Left colon (tissue), 2 donors: ENCODE measurements at regions of chr3 and their contacts with region 1.

Region 1: GRCh38 chr3:156554842-156555687 is at the start of gene SSR3:
- DNase-seq: peak; percentile 99
- ATAC-seq: peak; percentile 100
- total RNA-seq, gene SSR3: 114 to 123 TPM

Region 2: DNA sequence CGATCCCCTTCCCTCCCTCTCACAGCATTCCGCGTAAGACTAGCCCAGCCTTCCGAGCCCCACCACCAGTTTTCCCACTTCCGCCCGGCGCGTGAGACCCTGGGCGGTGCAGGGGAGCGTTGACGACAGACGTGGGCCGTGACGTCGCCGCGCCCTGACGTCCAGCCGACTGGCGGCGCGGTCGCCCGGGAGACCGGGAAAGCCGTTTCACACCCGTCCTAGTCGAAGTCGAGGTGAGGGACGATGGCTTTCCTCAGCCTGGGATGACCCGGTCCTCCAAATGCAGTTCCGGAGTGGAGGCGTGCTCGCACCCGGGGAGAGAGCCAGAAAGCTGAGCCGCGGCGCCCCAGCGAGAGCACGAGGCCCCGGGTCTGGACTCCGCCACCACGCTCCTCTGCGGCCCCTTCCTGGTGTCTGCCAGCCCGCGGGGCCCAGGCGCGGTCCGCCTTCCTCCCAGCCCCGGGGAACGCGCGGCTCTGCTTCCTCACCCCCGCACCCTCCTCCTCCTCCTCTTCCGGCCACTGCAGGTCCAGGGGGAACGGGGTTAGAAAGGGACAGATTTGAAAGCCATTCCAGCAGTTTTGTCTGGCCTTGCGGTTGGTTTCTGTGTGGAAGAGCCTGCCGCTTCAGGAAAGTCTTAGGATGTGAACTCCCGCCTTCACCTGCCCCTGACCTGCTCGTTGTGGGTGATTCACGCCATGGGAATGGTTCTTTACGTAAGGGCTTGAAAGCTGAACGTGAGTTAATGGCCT is 271.3 kb after region 1 on chr3 and contains the start of gene LEKR1:
- intact Hi-C with region 1: loop called in 1 of 2 experiments (anchors 10 kb)
- DNase-seq: peak; percentile 87 to 92
- ATAC-seq: peak; percentile 87
- total RNA-seq, gene LEKR1: 1.1 to 2.1 TPM

Region 3: GRCh38 chr3:157088601-157089454 is 533.8 kb after region 1 on chr3:
- intact Hi-C with region 1: loop called in 1 of 2 experiments (anchors 5 kb)
- DNase-seq: peak; percentile 94 to 97
- ATAC-seq: peak; percentile 82

Region 4: GRCh38 chr3:157130467-157131251 is 575.6 kb after region 1 on chr3:
- intact Hi-C with region 1: loop called in 1 of 2 experiments (anchors 10 kb)
- DNase-seq: peak; percentile 85 to 96
- ATAC-seq: peak; percentile 82